Dendritic cell treated with granulocyte-macrophage colony-stimulating factor and Interleukin-4, amounts not matched to agents 40 ng/mL and 50 ng/mL, for 4 days (primary cell): ENCODE measurements at regions of chr10 and their contacts with region 1.

Region 1: DNA sequence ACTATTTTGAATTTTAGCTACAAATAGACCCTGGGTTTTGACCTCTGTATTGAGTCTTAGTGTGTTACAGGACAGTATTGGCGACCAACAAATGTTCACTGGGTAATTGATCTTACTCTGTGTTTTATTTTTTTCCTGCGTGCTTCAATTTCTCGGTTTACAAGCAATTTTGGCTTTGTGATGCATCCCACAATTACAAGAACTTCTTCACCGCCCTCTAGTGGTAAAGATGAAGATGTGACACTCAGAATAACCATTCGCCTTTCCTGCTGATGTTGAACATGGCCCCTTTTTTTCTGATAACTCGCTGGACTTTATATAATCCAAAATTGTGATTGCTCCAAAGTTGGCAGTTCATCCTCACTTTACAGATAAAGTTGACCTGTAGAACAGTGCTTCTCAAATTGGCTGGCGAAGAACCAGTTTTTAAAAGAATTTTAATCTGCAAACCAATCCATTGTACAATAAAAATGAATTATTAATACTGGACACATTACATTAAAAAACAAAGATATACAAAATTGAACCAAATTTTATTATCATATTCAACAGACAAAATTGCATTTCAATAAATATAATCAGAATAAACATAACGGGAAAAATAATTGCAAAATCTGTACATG is 20.2 kb upstream of the SMC3 start:
- H3K4me3 Mint-ChIP-seq: no peak overlapping the region
- H3K27ac Mint-ChIP-seq: no peak overlapping the region
- H3K4me1 Mint-ChIP-seq: peaks cover 17% of the 10 kb centered on the region
- H3K27me3 Mint-ChIP-seq: peaks cover 15% of the 10 kb centered on the region

Region 2: DNA sequence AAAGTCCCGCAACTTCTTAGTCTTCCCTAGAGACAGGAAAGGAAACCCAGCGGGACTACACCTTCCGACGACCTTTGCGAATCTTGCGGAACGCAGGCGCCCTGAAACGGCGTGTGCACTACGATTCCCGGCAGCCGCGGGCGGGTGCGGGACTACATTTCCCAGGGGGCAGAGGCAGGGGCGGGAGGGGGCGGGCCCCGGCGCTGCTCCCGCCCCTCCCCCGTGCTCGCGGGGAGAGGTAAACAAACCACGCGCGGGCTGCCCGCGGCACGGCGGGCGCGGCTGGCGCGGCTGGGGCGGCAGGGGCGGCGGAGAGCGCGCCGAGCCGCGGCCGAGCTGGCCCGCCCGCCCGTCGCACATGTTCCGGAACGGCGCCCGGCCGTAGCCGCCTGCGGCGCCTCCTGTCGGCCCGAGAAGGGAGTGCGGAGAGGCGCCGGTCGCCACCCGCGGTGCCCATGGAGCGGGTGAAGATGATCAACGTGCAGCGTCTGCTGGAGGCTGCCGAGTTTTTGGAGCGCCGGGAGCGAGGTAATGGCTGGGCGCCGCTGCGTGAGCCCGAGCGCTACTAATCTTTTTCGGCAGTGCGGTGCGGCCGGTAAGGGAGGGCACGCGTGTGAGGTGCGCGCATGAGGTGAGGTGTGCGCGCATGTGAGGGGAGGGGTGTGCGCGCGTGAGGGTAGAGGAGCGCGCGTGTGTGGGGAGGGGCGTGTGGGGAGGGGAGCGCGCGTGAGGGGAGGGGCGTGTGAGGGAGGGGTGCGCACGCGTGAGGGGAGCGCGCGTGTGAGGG is 321.3 kb before region 1 on chr10:
- intact Hi-C with region 1: no loop called
- H3K4me3 Mint-ChIP-seq: peak overlapping the region; percentile 97
- H3K27ac Mint-ChIP-seq: peak overlapping the region; percentile 93
- H3K4me1 Mint-ChIP-seq: peaks cover 55% of the 10 kb centered on the region
- H3K27me3 Mint-ChIP-seq: no peaks in the 10 kb centered on the region

Region 3: GRCh38 chr10:110311357-110311949 is 235.8 kb before region 1 on chr10:
- intact Hi-C with region 1: loop called (anchors 1 kb)
- H3K4me3 Mint-ChIP-seq: no peak overlapping the region
- H3K27ac Mint-ChIP-seq: no peak overlapping the region
- H3K4me1 Mint-ChIP-seq: peaks cover 11% of the 10 kb centered on the region
- H3K27me3 Mint-ChIP-seq: peaks cover 8% of the 10 kb centered on the region

Region 4: DNA sequence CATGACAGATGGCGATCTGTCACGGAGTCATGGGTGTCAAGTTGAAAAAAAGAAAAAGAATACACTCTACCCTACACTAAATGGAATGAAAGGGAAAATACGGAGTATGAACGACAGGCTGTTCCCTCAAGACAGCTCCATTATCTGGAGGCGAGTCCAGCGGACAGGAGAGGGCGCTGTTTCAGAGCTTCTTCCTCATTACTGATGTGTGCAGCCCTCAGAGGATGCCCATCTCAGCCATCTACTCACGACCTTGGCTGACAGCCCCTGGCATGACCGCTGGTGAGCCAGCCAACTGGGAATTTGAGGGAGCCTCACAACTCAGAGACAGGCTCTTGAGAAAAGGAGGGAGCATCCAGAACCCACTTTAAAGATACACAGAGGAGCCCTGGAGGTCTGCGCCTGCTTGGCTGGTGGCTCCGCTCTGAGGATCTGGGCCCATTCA is 192.9 kb before region 1 on chr10:
- intact Hi-C with region 1: loop called (anchors 1 kb)
- H3K4me3 Mint-ChIP-seq: no peak overlapping the region
- H3K27ac Mint-ChIP-seq: no peak overlapping the region
- H3K4me1 Mint-ChIP-seq: peaks cover 19% of the 10 kb centered on the region
- H3K27me3 Mint-ChIP-seq: peaks cover 53% of the 10 kb centered on the region

Region 5: DNA sequence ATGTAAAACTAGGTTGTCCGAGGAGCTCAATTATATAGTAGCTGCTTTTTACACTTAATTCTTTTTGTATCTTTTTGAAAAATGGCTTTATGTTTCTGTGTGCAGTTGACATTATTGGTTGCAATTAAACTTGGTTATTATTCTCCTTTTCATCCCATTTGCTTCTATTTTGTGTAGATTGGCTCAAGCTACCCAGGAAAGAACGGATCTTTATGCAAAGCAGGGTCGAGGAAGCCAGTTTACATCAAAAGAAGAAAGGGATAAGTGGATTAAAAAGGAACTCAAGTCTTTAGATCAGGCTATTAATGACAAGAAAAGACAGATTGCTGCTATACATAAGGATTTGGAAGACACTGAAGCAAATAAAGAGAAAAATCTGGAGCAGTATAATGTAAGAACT is 36.8 kb after region 1 on chr10:
- intact Hi-C with region 1: no loop called
- H3K4me3 Mint-ChIP-seq: no peak overlapping the region
- H3K27ac Mint-ChIP-seq: no peak overlapping the region
- H3K4me1 Mint-ChIP-seq: no peaks in the 10 kb centered on the region
- H3K27me3 Mint-ChIP-seq: no peaks in the 10 kb centered on the region